ENCODE measurements at regions of chr22 and their contacts with region 1.

Region 1: GRCh38 chr22:38230108-38230825 is 28.5 kb downstream of the MAFF start:
- DNase-seq: no peak
- H3K4me3 ChIP-seq: no peak overlapping the region
- H3K27ac ChIP-seq: peak overlapping the region; percentile 42
- H3K4me1 ChIP-seq: peaks cover 36% of the 10 kb centered on the region
- H3K27me3 ChIP-seq: no peaks in the 10 kb centered on the region
- CTCF ChIP-seq: peak; percentile 56 to 71

Region 2: DNA sequence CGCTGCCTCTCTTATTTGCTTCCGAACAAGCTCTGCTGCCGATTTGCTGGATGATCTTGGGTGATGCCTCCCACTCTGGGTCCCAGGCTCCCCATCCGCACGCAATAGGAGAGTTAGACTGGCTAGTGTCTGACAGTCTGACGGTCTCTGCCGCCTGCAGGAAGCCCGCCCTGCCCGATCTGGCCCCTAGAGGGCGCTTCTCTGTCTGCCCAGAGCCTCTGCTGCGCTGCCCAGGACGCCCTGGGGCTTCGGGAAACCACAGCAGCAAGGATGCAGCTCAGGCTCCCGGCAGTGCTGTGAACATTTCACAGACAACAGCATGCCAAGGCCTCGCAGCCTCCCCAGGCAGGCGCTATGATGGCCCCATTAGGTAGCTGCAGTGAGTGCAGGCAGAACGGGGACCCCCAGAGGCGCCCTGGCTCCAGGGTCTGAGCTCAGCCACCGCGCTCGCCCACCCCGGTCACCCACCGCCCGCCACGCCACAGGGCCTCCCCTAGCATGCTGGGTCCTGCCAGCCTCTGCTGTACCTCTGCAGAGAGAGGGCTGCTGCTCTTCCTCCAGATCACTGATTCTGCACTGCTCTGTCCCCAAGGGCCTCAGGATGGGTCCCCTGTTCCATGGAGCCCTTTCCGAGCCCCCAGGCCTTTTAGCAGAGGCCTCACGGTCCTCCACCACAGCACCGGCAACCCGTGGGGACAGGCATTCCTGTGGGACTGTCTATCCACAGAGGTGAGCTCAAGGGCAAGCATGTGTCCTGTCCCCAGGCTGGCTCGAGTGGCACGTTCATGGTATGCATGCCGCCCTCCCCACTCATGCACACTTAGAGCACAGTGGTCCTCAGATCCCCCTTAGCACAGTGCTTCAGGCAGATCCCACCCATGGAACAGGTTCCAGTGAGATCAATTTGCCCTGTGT is 115.5 kb before region 1 on chr22:
- CTCF ChIA-PET with region 1: interaction called, 4 read pairs
- dilution Hi-C with region 1: no loop called
- in situ Hi-C with region 1: no loop called
- intact Hi-C with region 1: loop called (anchors 1 kb)
- DNase-seq: peak; percentile 67
- H3K4me3 ChIP-seq: no peak overlapping the region
- H3K27ac ChIP-seq: no peak overlapping the region
- H3K4me1 ChIP-seq: peaks cover 7% of the 10 kb centered on the region
- H3K27me3 ChIP-seq: no peaks in the 10 kb centered on the region
- CTCF ChIP-seq: peak; percentile 96 to 98

Region 3: DNA sequence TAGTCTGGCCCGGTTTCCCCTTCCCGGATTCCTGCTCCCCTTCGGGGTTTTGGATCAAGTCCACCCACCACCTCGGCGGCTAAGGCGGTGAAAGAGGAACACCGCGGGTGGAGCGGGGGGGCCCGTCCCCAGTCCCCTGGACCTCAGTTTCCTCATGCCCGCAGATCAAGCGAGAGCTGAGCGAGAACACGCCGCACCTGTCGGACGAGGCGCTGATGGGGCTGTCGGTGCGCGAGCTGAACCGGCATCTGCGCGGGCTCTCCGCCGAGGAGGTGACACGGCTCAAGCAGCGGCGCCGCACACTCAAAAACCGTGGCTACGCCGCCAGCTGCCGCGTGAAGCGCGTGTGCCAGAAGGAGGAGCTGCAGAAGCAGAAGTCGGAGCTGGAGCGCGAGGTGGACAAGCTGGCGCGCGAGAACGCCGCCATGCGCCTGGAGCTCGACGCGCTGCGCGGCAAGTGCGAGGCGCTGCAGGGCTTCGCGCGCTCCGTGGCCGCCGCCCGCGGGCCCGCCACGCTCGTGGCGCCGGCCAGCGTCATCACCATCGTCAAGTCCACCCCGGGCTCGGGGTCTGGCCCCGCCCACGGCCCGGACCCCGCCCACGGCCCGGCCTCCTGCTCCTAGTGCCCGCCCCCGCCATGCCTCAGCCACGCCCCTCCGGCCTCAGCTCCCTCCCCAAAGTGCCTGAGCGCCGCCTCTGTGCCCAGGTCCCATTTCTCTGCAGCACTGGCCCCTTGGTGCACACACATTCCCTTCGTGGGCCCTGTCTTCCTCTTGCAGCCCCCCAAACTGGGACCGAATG is 15.8 kb before region 1 on chr22:
- CTCF ChIA-PET with region 1: no interaction called
- dilution Hi-C with region 1: no loop called
- in situ Hi-C with region 1: no loop called
- intact Hi-C with region 1: loop called (anchors 1 kb)
- DNase-seq: no peak
- H3K4me3 ChIP-seq: no peak overlapping the region
- H3K27ac ChIP-seq: no peak overlapping the region
- H3K4me1 ChIP-seq: peaks cover 20% of the 10 kb centered on the region
- H3K27me3 ChIP-seq: no peaks in the 10 kb centered on the region
- CTCF ChIP-seq: no peak

Region 4: GRCh38 chr22:38262051-38262795 is 32.0 kb after region 1 on chr22:
- CTCF ChIA-PET with region 1: no interaction called
- dilution Hi-C with region 1: loop called (anchors 5 kb)
- in situ Hi-C with region 1: no loop called
- intact Hi-C with region 1: no loop called
- DNase-seq: peak; percentile 81
- H3K4me3 ChIP-seq: no peak overlapping the region
- H3K27ac ChIP-seq: no peak overlapping the region
- H3K4me1 ChIP-seq: peaks cover 15% of the 10 kb centered on the region
- H3K27me3 ChIP-seq: no peaks in the 10 kb centered on the region
- CTCF ChIP-seq: peak; percentile 51 to 85

Region 5: GRCh38 chr22:38272373-38273134 is 42.3 kb after region 1 on chr22 and contains the start of gene TMEM184B:
- CTCF ChIA-PET with region 1: no interaction called
- dilution Hi-C with region 1: loop called (anchors 5 kb)
- in situ Hi-C with region 1: no loop called
- intact Hi-C with region 1: loop called (anchors 5 kb)
- DNase-seq: peak; percentile 67
- H3K4me3 ChIP-seq: peak within 1 kb of the TSS; percentile 68 to 92 (median 84)
- H3K27ac ChIP-seq: peak within 1 kb of the TSS; percentile 55
- H3K4me1 ChIP-seq: peaks cover 24% of the 10 kb centered on the region
- H3K27me3 ChIP-seq: no peaks in the 10 kb centered on the region
- CTCF ChIP-seq: no peak
- total RNA-seq, gene TMEM184B: 26.2 to 68.5 TPM

Region 6: DNA sequence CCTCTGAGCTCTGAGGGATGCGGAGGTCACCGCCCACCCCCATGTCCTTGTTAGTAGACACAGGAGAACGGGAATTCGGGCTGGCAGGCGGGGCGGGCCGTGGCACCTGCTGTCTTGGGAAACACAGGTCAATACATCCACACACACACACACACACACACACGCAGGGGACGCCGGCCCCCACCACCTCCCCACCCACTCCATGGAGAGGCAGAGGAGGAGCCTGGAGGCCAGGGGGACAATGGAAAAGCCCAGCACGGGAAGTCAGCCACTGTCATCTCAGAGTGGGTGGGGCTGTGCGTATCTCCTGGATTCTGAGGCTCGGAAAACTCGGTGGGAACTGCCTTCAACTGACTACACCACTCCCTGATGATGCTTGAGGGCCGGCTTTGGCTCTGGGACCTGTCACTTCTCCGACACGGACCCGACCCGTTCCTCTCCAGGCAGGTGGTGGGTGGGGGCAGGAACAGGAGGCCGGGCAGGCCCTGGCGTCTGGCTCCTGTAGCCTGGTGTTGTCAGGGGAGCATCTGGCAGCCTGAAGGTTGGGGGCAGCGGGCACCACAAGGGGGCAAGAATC is 61.0 kb after region 1 on chr22:
- CTCF ChIA-PET with region 1: no interaction called
- dilution Hi-C with region 1: no loop called
- in situ Hi-C with region 1: no loop called
- intact Hi-C with region 1: no loop called
- DNase-seq: no peak
- H3K4me3 ChIP-seq: no peak overlapping the region
- H3K27ac ChIP-seq: no peak overlapping the region
- H3K4me1 ChIP-seq: peaks cover 7% of the 10 kb centered on the region
- H3K27me3 ChIP-seq: no peaks in the 10 kb centered on the region
- CTCF ChIP-seq: peak in 1 of 2 donors; percentile 4

Measured in mammary epithelial cell (primary cell).